Mammary epithelial cell (primary cell): ENCODE measurements at regions of chr12 and their contacts with region 1.

Region 1: DNA sequence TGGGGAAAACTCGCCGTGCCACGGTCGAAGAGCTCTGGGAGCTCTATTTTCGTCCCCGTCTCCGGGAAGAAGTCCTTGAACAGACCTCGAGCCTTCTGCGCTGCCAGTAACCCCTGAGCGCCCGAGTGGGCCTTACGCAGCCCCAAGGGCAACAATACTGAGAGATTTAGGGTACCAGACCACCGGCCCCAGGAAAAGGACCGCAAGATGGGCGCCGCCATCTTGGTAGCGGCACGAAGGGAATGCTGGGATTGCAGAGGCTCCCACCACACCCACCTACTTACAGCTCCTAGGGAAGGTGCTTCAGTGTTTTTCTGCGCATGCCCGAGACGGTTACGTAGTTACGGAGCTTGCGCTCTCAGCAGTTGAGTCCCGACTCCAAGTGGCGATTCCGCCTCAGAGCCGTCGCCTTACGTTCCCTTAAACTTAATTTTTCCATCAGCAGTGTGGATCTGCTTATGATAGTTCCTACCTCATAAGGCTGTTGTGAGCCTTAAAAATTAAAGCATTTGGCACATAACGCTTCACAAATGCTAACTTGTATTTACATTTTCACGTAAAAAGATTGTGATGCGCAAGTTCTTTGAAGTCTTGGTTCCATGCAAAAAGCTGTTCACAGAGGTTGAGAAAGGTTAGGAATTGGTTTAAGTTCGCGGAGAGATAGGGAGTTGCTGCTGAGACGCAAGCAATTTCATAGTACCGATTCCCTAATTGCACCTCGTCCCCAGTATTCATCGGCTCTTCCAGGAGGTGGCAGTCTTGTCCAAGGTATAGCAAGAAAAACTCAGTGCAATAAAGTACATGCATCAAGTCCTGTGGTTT is at the start of gene YARS2:
- DNase-seq: peak; percentile 93
- H3K4me3 ChIP-seq: peak within 1 kb of the TSS; percentile 68 to 82 (median 76)
- H3K27ac ChIP-seq: peak within 1 kb of the TSS; percentile 96
- H3K4me1 ChIP-seq: peaks cover 23% of the 10 kb centered on the region
- H3K27me3 ChIP-seq: no peaks in the 10 kb centered on the region
- CTCF ChIP-seq: peak; percentile 71 to 81
- total RNA-seq, gene YARS2: 31.5 to 37.5 TPM

Region 2: GRCh38 chr12:32399337-32400113 is 356.3 kb before region 1 on chr12 and contains the start of gene FGD4:
- CTCF ChIA-PET with region 1: no interaction called
- dilution Hi-C with region 1: no loop called
- in situ Hi-C with region 1: no loop called
- intact Hi-C with region 1: loop called (anchors 1 kb)
- DNase-seq: peak; percentile 95
- H3K4me3 ChIP-seq: peak within 1 kb of the TSS; percentile 72 to 99 (median 93)
- H3K27ac ChIP-seq: peak within 1 kb of the TSS; percentile 90
- H3K4me1 ChIP-seq: peaks cover 21% of the 10 kb centered on the region
- H3K27me3 ChIP-seq: no peaks in the 10 kb centered on the region
- CTCF ChIP-seq: peak; percentile 15 to 58
- total RNA-seq, gene FGD4: 20.8 to 35.3 TPM

Region 3: GRCh38 chr12:32679091-32679919 is 76.6 kb before region 1 on chr12 and contains the start of gene DNM1L:
- CTCF ChIA-PET with region 1: no interaction called
- dilution Hi-C with region 1: no loop called
- in situ Hi-C with region 1: no loop called
- intact Hi-C with region 1: loop called (anchors 2 kb)
- DNase-seq: peak; percentile 96
- H3K4me3 ChIP-seq: peak within 1 kb of the TSS; percentile 82 to 100 (median 97)
- H3K27ac ChIP-seq: peak within 1 kb of the TSS; percentile 96
- H3K4me1 ChIP-seq: peaks cover 10% of the 10 kb centered on the region
- H3K27me3 ChIP-seq: no peaks in the 10 kb centered on the region
- CTCF ChIP-seq: peak in 1 of 2 donors; percentile 4
- total RNA-seq, gene DNM1L: 96.9 to 151 TPM

Region 4: DNA sequence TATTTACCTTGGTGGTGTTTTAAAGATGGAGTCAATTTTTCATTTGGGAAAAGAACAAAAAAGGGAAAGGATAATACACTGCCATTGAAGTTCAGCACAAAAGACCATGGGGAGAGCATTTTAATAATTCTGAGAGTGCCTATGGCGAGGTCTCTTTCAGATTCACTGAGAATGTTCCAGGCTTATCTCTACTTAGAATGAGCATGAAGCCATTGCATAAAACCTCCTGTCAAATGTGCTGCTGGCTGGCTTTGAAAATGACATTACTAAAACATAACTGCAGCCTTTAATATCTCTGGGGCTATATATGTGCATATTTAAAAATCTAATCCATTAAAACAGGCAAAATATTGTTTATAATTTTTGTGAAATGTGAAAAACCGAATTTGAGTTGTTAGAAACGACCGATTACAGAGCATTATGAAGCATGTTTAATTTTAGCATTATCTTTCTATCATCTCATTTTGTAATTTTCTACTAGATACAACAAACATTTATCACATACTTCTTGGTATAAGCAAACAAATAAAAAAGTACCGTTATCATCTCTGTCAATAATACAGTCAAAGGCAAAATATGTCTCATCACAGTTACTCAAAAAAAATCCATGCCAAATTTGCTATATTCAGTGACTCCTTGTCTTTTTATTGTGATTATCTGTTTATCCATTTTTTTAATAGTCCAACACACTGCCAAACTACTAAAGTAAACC is 45.6 kb after region 1 on chr12:
- CTCF ChIA-PET with region 1: no interaction called
- dilution Hi-C with region 1: no loop called
- in situ Hi-C with region 1: no loop called
- intact Hi-C with region 1: no loop called
- DNase-seq: no peak
- H3K4me3 ChIP-seq: no peak overlapping the region
- H3K27ac ChIP-seq: no peak overlapping the region
- H3K4me1 ChIP-seq: no peaks in the 10 kb centered on the region
- H3K27me3 ChIP-seq: no peaks in the 10 kb centered on the region
- CTCF ChIP-seq: no peak

Region 5: GRCh38 chr12:32896432-32897273 is 140.8 kb after region 1 on chr12 and contains the start of gene PKP2:
- CTCF ChIA-PET with region 1: interaction called, 3 read pairs
- dilution Hi-C with region 1: no loop called
- in situ Hi-C with region 1: loop called in 1 of 2 experiments (anchors 10 kb)
- intact Hi-C with region 1: loop called (anchors 1 kb)
- DNase-seq: peak; percentile 98
- H3K4me3 ChIP-seq: peak within 1 kb of the TSS; percentile 66 to 97 (median 85)
- H3K27ac ChIP-seq: peak within 1 kb of the TSS; percentile 83
- H3K4me1 ChIP-seq: peaks cover 44% of the 10 kb centered on the region
- H3K27me3 ChIP-seq: no peaks in the 10 kb centered on the region
- CTCF ChIP-seq: no peak
- total RNA-seq, gene PKP2: 42.3 to 42.8 TPM

Region 6: DNA sequence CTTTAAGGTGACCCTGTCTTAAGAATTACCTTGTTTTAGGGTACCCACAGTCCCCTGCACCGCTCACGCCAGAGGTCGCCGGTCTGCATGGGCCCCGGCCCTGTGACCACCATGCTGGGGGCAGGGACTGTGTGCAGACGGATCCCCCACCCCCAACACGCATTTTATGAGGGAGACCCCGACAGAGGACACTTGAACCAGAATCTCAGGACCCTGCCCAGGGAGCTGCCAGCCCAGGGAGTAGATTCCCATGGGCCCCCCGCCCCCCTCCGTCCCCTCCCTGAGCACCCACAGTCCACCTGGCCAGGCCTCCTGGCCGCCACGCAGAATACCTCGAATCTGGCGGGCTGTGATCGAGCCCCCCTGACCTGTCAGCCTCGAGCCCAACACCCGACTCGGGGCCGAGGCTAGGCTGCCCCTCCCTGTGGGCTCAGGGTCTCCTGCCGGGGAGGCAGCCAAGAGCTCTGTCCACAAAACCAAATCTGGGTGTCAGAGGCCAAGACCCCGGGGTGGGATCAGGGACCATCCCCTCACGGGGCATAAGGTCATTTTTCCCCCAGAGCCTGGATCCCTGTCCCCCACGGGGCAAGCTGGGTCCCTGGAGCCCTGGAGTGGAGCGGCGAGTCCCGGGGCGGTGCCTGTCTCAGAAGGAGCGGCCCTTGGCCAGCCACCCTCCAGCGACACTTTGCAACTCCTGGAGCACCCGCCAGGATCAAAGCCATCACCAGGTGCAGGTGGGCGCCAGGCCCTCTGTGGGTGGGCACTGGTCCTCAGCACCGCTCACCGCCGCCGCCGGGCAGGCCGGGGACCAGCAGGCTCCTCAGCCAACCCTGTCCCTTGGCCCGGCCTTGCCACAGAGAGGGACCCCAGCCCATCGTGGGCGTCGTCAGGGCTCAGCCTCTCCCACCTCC is 296.5 kb after region 1 on chr12:
- CTCF ChIA-PET with region 1: no interaction called
- dilution Hi-C with region 1: no loop called
- in situ Hi-C with region 1: no loop called
- intact Hi-C with region 1: no loop called
- DNase-seq: no peak
- H3K4me3 ChIP-seq: no peak overlapping the region
- H3K27ac ChIP-seq: no peak overlapping the region
- H3K4me1 ChIP-seq: no peaks in the 10 kb centered on the region
- H3K27me3 ChIP-seq: no peaks in the 10 kb centered on the region
- CTCF ChIP-seq: no peak

Region 7: DNA sequence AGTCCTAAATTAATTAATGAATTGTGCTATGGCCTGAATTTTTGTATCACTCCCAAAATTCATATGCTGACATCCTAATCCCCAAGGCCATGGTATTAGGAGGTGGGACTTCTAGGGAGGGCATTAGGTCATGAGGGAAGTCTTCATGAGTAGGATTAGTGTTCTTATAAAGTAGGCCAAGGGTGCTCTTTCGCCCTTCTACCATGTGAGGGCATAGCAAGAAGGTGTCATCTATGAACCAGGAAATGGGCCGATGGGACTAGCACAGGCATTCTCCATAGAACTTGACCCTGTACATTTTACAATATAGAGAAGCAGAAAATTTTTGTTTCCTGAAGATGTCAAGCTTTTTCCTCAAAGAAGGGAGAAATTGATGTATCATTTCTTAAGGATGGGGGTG is 671.2 kb after region 1 on chr12:
- CTCF ChIA-PET with region 1: no interaction called
- dilution Hi-C with region 1: no loop called
- in situ Hi-C with region 1: no loop called
- intact Hi-C with region 1: loop called (anchors 2 kb)
- DNase-seq: peak; percentile 45
- H3K4me3 ChIP-seq: no peak overlapping the region
- H3K27ac ChIP-seq: no peak overlapping the region
- H3K4me1 ChIP-seq: no peaks in the 10 kb centered on the region
- H3K27me3 ChIP-seq: peaks cover 2% of the 10 kb centered on the region
- CTCF ChIP-seq: peak; percentile 50 to 63

Region 8: DNA sequence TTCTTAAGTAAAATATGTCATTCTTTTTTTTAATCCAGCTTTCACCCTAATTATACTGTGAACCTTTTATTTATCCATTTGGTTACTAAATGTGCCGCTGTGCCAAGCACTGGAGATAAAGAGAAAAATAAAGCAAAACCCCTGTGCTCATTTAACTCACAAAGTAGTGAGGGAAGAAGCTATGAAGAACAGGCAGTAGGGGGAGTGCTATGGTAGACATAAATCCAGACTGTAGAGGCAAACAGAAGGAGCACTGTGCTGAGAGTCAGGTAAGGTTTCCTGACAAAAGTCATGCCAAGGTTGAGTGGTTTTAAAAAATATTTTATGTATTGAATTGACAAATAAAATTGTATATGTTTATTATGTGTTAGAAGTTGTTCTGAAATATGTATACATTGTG is 872.2 kb after region 1 on chr12:
- CTCF ChIA-PET with region 1: no interaction called
- dilution Hi-C with region 1: no loop called
- in situ Hi-C with region 1: no loop called
- intact Hi-C with region 1: loop called (anchors 1 kb)
- DNase-seq: peak; percentile 14
- H3K4me3 ChIP-seq: no peak overlapping the region
- H3K27ac ChIP-seq: no peak overlapping the region
- H3K4me1 ChIP-seq: no peaks in the 10 kb centered on the region
- H3K27me3 ChIP-seq: no peaks in the 10 kb centered on the region
- CTCF ChIP-seq: peak; percentile 16 to 49

Region 9: GRCh38 chr12:34022079-34022830 is 1266.4 kb after region 1 on chr12 and contains the start of gene ALG10:
- CTCF ChIA-PET with region 1: no interaction called
- dilution Hi-C with region 1: no loop called
- in situ Hi-C with region 1: loop called in 1 of 2 experiments (anchors 25 kb)
- intact Hi-C with region 1: loop called (anchors 1 kb)
- DNase-seq: peak; percentile 97
- H3K4me3 ChIP-seq: peak within 1 kb of the TSS; percentile 52 to 94 (median 78)
- H3K27ac ChIP-seq: peak within 1 kb of the TSS; percentile 77
- H3K4me1 ChIP-seq: peaks cover 5% of the 10 kb centered on the region
- H3K27me3 ChIP-seq: no peaks in the 10 kb centered on the region
- CTCF ChIP-seq: peak; percentile 52 to 62
- total RNA-seq, gene ALG10: 12.6 to 18.7 TPM